Body of pancreas (tissue), 4 donors: ENCODE measurements at regions of chr5 and their contacts with region 1.

Region 1: DNA sequence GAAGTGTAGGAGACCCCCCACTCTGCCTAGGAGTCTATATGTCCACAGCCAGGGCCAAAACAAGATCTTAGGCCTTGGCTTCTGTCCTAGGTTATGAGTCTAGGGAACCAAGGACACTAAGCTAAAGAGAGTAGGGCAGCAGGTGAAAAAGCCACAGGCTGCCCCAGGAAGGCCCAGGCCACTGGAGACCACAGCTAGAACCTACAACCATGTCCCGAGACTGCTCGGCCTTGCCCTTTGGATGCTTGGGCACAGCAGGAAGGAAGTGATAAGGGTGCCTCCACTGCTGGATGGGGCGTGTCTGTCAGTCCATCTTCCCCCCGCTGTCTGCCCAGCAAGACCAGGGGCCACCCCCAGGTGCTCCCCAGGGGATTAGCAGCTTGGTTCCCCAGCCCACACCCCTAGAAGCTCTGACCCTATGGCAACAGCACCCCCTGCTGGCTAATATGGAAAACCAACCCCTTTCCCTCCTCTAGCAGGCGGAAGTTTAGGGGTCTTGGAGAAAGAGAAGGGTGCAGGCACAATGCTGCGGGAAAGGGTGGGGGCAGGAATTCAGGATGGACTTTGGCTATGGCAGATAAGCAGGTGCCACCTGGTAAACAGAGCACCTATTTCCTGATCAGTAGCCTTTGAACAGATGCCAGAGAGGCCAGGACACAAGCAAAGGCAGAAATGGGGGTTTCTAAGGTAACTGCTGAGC is 10.5 kb upstream of the IRF1 start:
- DNase-seq: peak; percentile 65 to 82 (median 66)
- ATAC-seq: no peak
- H3K4me3 ChIP-seq: no peak overlapping the region
- H3K27ac ChIP-seq: peak overlapping the region; percentile 47 to 99 (median 84)
- H3K4me1 ChIP-seq: peaks cover 53% of the 10 kb centered on the region
- H3K27me3 ChIP-seq: no peaks in the 10 kb centered on the region
- CTCF ChIP-seq: peak; percentile 77 to 93 (median 80)
- POLR2A ChIP-seq: no peak

Region 2: GRCh38 chr5:132384506-132385050 is 116.5 kb before region 1 on chr5:
- intact Hi-C with region 1: loop called (anchors 5 kb)
- DNase-seq: no peak
- ATAC-seq: no peak
- H3K4me3 ChIP-seq: no peak overlapping the region
- H3K27ac ChIP-seq: no peak overlapping the region
- H3K4me1 ChIP-seq: peaks cover 39% of the 10 kb centered on the region
- H3K27me3 ChIP-seq: no peaks in the 10 kb centered on the region
- CTCF ChIP-seq: no peak
- POLR2A ChIP-seq: no peak